ENCODE measurements at regions of chr9 and their contacts with region 1.

Region 1: GRCh38 chr9:15606643-15607472 is 54.0 kb downstream of the CCDC171 start:
- DNase-seq: peak; percentile 39
- H3K4me3 ChIP-seq: no peak overlapping the region
- H3K27ac ChIP-seq: no peak overlapping the region
- H3K4me1 ChIP-seq: no peaks in the 10 kb centered on the region
- H3K27me3 ChIP-seq: no peaks in the 10 kb centered on the region
- CTCF ChIP-seq: peak; percentile 56

Region 2: DNA sequence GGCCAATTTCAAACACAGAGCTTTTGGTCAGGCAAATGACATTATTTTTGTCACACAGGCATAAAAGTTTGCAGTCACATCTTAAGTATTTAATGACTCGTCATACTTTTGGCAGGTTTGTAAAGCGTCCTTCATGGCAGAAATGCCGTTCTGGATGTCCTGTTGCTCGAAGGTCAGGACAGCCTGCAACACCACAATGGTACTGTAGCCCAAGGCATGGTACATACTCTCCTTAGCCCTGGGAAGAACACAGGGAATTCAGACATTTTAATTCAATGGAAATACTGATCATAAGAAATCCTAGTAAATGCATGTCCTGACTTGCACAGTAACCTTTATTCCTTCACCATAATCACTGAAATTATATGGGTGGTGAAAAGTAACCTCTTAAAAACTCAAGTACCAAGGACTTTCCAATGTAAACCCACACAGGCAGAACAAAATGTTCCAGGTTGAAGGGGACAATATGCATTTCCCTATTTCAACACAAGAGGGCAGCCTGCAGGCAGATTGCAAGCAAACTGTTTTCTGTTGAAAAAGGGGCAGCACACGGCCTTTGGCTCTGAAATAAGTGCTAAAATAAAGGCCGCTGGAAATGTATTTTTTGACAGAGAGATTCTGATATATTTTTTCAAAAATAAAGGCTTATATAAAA is 395.6 kb before region 1 on chr9:
- CTCF ChIA-PET with region 1: no interaction called
- POLR2A ChIA-PET with region 1: no interaction called
- intact Hi-C with region 1: loop called (anchors 5 kb)
- DNase-seq: peak; percentile 68
- H3K4me3 ChIP-seq: peak overlapping the region; percentile 7
- H3K27ac ChIP-seq: no peak overlapping the region
- H3K4me1 ChIP-seq: peaks cover 9% of the 10 kb centered on the region
- H3K27me3 ChIP-seq: no peaks in the 10 kb centered on the region
- CTCF ChIP-seq: peak; percentile 68

Region 3: DNA sequence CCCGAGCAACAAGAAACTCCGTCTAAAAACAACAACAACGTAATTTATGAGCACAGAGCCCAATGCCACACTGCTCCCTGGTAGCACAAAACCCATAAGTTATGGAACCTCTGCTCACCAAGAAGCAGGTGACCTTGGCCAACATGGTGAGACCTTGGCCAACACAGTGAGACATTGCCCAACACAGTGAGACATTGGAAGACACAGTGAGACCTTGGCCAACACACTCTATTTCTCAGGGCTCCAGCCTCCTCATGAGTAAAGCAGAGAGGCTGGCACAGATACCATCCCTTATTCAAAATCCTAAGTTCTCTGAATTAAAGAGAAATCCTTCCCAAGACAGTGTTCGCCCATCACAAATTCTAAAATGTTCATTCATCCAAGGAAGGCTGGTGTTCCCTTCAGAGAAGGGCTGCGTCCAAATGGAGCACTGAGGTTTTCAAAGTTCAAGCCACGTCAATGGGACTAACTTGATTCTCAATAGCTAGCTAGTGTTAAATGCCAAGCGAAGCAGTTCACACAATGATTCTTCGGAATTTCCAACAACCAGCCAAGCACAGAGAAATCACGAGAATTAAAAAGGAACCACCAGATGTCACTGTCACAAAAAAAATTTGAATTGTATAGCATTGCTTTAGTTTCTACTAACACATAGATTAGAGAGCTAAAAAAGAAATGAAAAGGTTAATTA is 329.3 kb before region 1 on chr9:
- CTCF ChIA-PET with region 1: no interaction called
- POLR2A ChIA-PET with region 1: no interaction called
- intact Hi-C with region 1: loop called (anchors 5 kb)
- DNase-seq: peak; percentile 12
- H3K4me3 ChIP-seq: no peak overlapping the region
- H3K27ac ChIP-seq: no peak overlapping the region
- H3K4me1 ChIP-seq: no peaks in the 10 kb centered on the region
- H3K27me3 ChIP-seq: no peaks in the 10 kb centered on the region
- CTCF ChIP-seq: peak; percentile 47; the same call in 1 of the 2 replicates

Region 4: DNA sequence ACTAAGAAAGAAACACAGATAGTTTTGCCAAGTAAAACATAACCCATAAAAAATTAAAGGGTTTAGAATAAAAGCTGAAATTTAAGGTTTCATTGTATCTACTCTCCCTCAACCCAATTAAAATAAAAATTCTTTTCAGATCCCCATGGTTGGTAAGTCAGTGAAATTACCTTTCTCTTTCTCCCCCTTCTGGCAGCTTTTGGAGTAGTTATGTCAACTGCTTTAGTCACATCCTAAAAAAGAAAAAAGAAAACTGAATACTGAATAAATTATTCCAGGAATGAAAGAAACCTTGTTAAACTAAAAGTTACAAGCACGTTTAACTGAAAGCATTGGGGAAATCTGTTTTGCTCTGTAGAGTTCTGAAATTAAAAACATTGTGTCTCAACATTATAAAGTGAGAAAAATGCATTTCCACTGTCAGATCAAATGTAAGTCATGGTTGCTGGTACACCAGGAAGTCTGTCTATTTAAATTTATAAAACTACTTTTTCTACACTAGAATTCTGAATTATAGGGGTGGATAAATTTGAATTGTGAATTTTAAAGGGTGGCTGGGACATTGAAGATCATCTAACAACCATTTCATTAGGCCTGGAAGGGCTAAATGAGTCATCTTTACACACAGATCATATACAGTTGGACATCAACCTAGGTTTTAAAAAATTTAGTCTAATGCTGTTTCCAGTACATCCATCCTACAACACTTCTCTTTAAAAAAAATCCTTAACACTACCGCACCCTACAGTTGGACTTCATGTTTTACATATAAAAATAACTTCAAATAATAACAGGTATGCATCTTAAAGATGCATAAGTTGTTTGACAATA is 120.8 kb before region 1 on chr9:
- CTCF ChIA-PET with region 1: no interaction called
- POLR2A ChIA-PET with region 1: no interaction called
- intact Hi-C with region 1: no loop called
- DNase-seq: peak; percentile 24
- H3K4me3 ChIP-seq: no peak overlapping the region
- H3K27ac ChIP-seq: no peak overlapping the region
- H3K4me1 ChIP-seq: no peaks in the 10 kb centered on the region
- H3K27me3 ChIP-seq: no peaks in the 10 kb centered on the region
- CTCF ChIP-seq: peak; percentile 41; the same call in 1 of the 2 replicates